T-cell (primary cell): ENCODE measurements at regions of chr12 and their contacts with region 1.

Region 1: GRCh38 chr12:56127888-56128669 is at the start of gene ESYT1:
- DNase-seq: peak; percentile 88 to 99 (median 98)
- ATAC-seq: peak; percentile 86 to 91 (median 89)
- H3K4me3 ChIP-seq: peak within 1 kb of the TSS; percentile 86 to 95
- H3K4me3 Mint-ChIP-seq: peak within 1 kb of the TSS; percentile 97 to 99 (median 98)
- H3K27ac ChIP-seq: peak within 1 kb of the TSS; percentile 76
- H3K27ac Mint-ChIP-seq: peak within 1 kb of the TSS; percentile 97
- H3K4me1 ChIP-seq: peaks cover 36 to 62% of the 10 kb centered on the region in 2 experiments
- H3K4me1 Mint-ChIP-seq: peaks cover 68 to 74% (median 72%) of the 10 kb centered on the region in 3 donors
- H3K27me3 ChIP-seq: no peaks in the 10 kb centered on the region
- H3K27me3 Mint-ChIP-seq: no peaks in the 10 kb centered on the region
- total RNA-seq, gene ESYT1: 181 to 298 (median 276) TPM

Region 2: GRCh38 chr12:56053407-56053893 is 74.6 kb before region 1 on chr12:
- CTCF ChIA-PET with region 1: no interaction called
- POLR2A ChIA-PET with region 1: no interaction called
- DNase-seq: no peak
- ATAC-seq: no peak
- H3K4me3 ChIP-seq: no peak overlapping the region
- H3K4me3 Mint-ChIP-seq: no peak overlapping the region
- H3K27ac ChIP-seq: no peak overlapping the region
- H3K27ac Mint-ChIP-seq: no peak overlapping the region
- H3K4me1 ChIP-seq: no peaks in the 10 kb centered on the region
- H3K4me1 Mint-ChIP-seq: peaks cover 0 to 7% (median 4%) of the 10 kb centered on the region in 3 donors
- H3K27me3 ChIP-seq: peaks cover 0 to 2% of the 10 kb centered on the region in 2 experiments
- H3K27me3 Mint-ChIP-seq: no peaks in the 10 kb centered on the region

Region 3: DNA sequence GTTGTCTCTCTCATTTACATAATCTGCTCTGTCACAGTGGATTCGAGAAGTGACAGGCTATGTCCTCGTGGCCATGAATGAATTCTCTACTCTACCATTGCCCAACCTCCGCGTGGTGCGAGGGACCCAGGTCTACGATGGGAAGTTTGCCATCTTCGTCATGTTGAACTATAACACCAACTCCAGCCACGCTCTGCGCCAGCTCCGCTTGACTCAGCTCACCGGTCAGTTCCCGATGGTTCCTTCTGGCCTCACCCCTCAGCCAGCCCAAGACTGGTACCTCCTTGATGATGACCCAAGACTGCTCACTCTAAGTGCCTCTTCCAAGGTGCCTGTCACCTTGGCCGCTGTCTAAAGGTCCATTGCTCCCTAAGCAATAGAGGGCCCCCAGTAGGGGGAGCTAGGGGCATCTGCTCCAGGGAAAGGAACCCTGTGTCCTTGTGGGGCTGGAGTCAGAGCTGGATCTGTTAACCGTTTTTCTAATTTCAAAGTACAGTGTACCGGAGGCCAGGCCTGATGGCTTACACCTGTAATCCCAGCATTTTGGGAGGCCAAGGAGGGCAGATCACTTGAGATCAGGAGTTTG is 43.0 kb before region 1 on chr12:
- CTCF ChIA-PET with region 1: no interaction called
- POLR2A ChIA-PET with region 1: no interaction called
- DNase-seq: peak in 4 of 35 experiments; percentile 9 to 30 (median 16)
- ATAC-seq: no peak
- H3K4me3 ChIP-seq: no peak overlapping the region
- H3K4me3 Mint-ChIP-seq: no peak overlapping the region
- H3K27ac ChIP-seq: no peak overlapping the region
- H3K27ac Mint-ChIP-seq: no peak overlapping the region
- H3K4me1 ChIP-seq: peaks cover 0 to 13% of the 10 kb centered on the region in 2 experiments
- H3K4me1 Mint-ChIP-seq: peaks cover 6 to 9% (median 7%) of the 10 kb centered on the region in 3 donors
- H3K27me3 ChIP-seq: peaks cover 3 to 43% of the 10 kb centered on the region in 2 experiments
- H3K27me3 Mint-ChIP-seq: peaks cover 0 to 11% of the 10 kb centered on the region in 2 donors

Region 4: DNA sequence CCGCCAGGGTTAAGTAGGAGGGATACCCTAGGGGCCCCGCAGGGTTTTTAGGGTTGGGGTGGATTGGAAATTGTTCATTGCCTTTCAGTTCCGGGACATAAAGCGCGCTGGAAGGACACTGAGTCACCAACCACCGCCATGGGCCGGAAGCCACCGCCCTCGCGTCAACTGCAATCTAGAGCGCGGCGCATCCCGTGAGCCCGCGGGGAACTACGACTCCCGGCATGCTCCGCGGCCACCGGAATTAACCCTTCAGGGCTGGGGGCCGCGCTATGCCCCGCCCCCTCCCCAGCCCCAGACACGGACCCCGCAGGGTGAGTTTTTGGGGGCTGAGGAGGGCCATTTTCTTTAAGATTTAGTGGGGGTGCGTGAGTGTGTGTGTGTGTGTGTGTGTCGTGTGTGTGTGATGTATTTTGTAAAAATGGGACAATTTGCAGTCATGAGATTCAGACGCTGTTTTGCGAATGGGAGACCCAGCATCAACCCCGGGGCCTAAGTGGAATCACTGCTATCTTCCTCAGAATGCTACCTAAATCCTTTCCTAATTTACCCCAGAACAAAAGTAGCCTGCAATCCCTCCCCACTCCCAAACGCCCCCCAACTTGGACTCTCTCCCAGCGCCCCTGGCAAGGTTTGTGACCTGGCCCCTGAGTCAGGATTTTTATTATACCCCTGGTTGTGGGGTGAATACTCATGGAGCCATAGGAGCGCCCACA is 24.4 kb after region 1 on chr12 and contains the start of gene MYL6B:
- CTCF ChIA-PET with region 1: interaction called, 3 to 16 read pairs
- POLR2A ChIA-PET with region 1: no interaction called
- DNase-seq: peak; percentile 80 to 95 (median 89)
- ATAC-seq: peak; percentile 93 to 94 (median 93)
- H3K4me3 ChIP-seq: peak within 1 kb of the TSS; percentile 58 to 80
- H3K4me3 Mint-ChIP-seq: peak within 1 kb of the TSS; percentile 85 to 93 (median 93)
- H3K27ac ChIP-seq: peak within 1 kb of the TSS; percentile 87
- H3K27ac Mint-ChIP-seq: peak within 1 kb of the TSS; percentile 96 to 99
- H3K4me1 ChIP-seq: peaks cover 11 to 28% of the 10 kb centered on the region in 2 experiments
- H3K4me1 Mint-ChIP-seq: peaks cover 30 to 45% (median 44%) of the 10 kb centered on the region in 3 donors
- H3K27me3 ChIP-seq: no peaks in the 10 kb centered on the region
- H3K27me3 Mint-ChIP-seq: no peaks in the 10 kb centered on the region
- total RNA-seq, gene MYL6B: 5.9 to 12.4 (median 7.7) TPM

Region 5: GRCh38 chr12:56178347-56178746 is 50.3 kb after region 1 on chr12:
- CTCF ChIA-PET with region 1: no interaction called
- POLR2A ChIA-PET with region 1: interaction called, 3 to 10 read pairs
- DNase-seq: no peak
- ATAC-seq: no peak
- H3K4me3 ChIP-seq: no peak overlapping the region
- H3K4me3 Mint-ChIP-seq: no peak overlapping the region
- H3K27ac ChIP-seq: no peak overlapping the region
- H3K27ac Mint-ChIP-seq: no peak overlapping the region
- H3K4me1 ChIP-seq: no peaks in the 10 kb centered on the region
- H3K4me1 Mint-ChIP-seq: peaks cover 0 to 6% (median 0%) of the 10 kb centered on the region in 3 donors
- H3K27me3 ChIP-seq: no peaks in the 10 kb centered on the region
- H3K27me3 Mint-ChIP-seq: no peaks in the 10 kb centered on the region

Region 6: DNA sequence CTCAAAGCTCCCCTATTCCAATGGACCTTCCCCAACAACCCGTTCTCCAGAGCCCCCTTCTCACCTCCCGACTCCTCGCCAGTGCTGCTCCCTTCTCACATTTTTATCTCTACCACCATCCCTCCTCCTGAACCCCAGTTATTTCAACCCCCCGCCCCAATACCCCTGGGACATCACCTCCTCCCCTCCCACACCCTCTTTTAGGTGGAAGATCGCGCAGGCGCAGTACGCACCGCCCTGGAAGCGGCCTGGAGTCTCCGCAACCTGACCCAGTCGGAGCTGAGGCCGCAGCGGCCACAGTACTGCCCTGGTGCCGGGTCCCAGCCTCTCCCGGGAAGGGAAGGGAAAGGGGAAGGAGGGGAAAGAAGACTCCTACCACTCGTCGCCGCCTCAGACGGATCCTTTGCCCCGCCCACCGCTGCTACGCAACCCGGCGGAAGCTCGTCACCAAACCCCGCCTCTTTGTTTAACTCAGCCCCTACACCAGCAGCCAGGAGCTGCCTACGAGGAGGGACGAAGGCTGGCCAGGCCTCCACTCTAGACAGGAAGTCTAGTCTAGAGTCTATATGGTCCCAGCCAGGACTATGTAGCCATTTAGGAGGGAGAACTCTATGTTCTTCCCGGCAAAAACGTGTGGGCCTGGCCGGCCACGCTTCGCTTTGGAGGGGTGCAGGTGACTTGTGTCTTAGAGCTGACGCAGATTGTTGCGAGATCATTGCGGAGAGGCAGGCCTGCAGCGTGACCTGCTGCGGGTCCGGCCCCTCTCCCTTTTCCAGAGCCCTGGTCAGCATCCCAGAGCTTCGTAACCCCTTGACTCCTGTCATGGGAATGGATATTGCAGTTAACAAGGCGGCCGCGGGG is 93.7 kb after region 1 on chr12 and contains the start of gene RNF41:
- CTCF ChIA-PET with region 1: interaction called in 1 of 2 experiments, 12 read pairs
- POLR2A ChIA-PET with region 1: interaction called in 1 of 2 experiments, 4 read pairs
- DNase-seq: peak; percentile 80 to 96 (median 89)
- ATAC-seq: peak; percentile 81 to 85 (median 82)
- H3K4me3 ChIP-seq: peak within 1 kb of the TSS; percentile 98
- H3K4me3 Mint-ChIP-seq: peak within 1 kb of the TSS; percentile 98 to 100 (median 98)
- H3K27ac ChIP-seq: peak within 1 kb of the TSS; percentile 94
- H3K27ac Mint-ChIP-seq: peak within 1 kb of the TSS; percentile 98 to 99
- H3K4me1 ChIP-seq: peaks cover 18 to 54% of the 10 kb centered on the region in 2 experiments
- H3K4me1 Mint-ChIP-seq: peaks cover 47 to 52% (median 49%) of the 10 kb centered on the region in 3 donors
- H3K27me3 ChIP-seq: no peaks in the 10 kb centered on the region
- H3K27me3 Mint-ChIP-seq: no peaks in the 10 kb centered on the region
- total RNA-seq, gene RNF41: 26.3 to 43.1 (median 39.4) TPM